GM12878 (cell line): ENCODE measurements at regions of chrX and their contacts with region 1.

Region 1: GRCh38 chrX:66039944-66040343 is at the start of gene VSIG4:
- DNase-seq: no peak
- ATAC-seq: no peak
- H3K4me3 ChIP-seq: no peak within 1 kb of the TSS
- H3K27ac ChIP-seq: no peak within 1 kb of the TSS
- H3K4me1 ChIP-seq: peaks cover 15% of the 10 kb centered on the region
- H3K27me3 ChIP-seq: no peaks in the 10 kb centered on the region
- CTCF ChIP-seq: no peak
- EP300 ChIP-seq: no peak
- POLR2A ChIP-seq: no peak
- RAD21 ChIP-seq: no peak
- polyA plus RNA-seq, gene VSIG4: not detected

Region 2: GRCh38 chrX:66022632-66023384 is 17.1 kb before region 1 on chrX:
- CTCF ChIA-PET with region 1: interaction called, 11 read pairs
- POLR2A ChIA-PET with region 1: interaction called, 18 read pairs
- RAD21 ChIA-PET with region 1: interaction called, 47 read pairs
- SMC1A ChIA-PET with region 1: interaction called, 85 read pairs
- in situ Hi-C with region 1: no loop called
- intact Hi-C with region 1: no loop called
- DNase-seq: no peak
- ATAC-seq: peak; percentile 46; the same call in 2 of the 3 replicates
- H3K4me3 ChIP-seq: no peak overlapping the region
- H3K27ac ChIP-seq: no peak overlapping the region
- H3K4me1 ChIP-seq: peaks cover 24% of the 10 kb centered on the region
- H3K27me3 ChIP-seq: no peaks in the 10 kb centered on the region
- CTCF ChIP-seq: 0 out of 6 replicates have a peak, but pooled peaks of 2 of the 3 experiments have one; percentile 25 to 41
- EP300 ChIP-seq: no peak
- POLR2A ChIP-seq: no peak
- RAD21 ChIP-seq: peak; percentile 62